Activated CD4-positive, alpha-beta memory T cell treated with anti-CD3 and anti-CD28 coated beads for 36 hours (primary cell): ENCODE measurements at regions of chr3 and their contacts with region 1.

Region 1: GRCh38 chr3:23945903-23946751 is 1.0 kb downstream of the NR1D2 start:
- DNase-seq: peak; percentile 98
- H3K4me3 Mint-ChIP-seq: peak overlapping the region; percentile 87
- H3K27ac Mint-ChIP-seq: peak overlapping the region; percentile 96
- H3K4me1 Mint-ChIP-seq: peaks cover 46% of the 10 kb centered on the region
- H3K27me3 Mint-ChIP-seq: peaks cover 3% of the 10 kb centered on the region

Region 2: GRCh38 chr3:23805633-23806533 is 140.2 kb before region 1 on chr3 and contains the start of gene UBE2E1:
- CTCF ChIA-PET with region 1: no interaction called
- POLR2A ChIA-PET with region 1: interaction called, 3 read pairs
- intact Hi-C with region 1: loop called (anchors 2 kb)
- DNase-seq: peak; percentile 73
- H3K4me3 Mint-ChIP-seq: peak within 1 kb of the TSS; percentile 89
- H3K27ac Mint-ChIP-seq: peak within 1 kb of the TSS; percentile 89
- H3K4me1 Mint-ChIP-seq: peaks cover 38% of the 10 kb centered on the region
- H3K27me3 Mint-ChIP-seq: peaks cover 2% of the 10 kb centered on the region
- total RNA-seq, gene UBE2E1: 82.8 to 84.8 TPM

Region 3: GRCh38 chr3:23916886-23917678 is 29.0 kb before region 1 on chr3 and contains the starts of genes NKIRAS1 and RPL15:
- CTCF ChIA-PET with region 1: no interaction called
- POLR2A ChIA-PET with region 1: interaction called, 31 read pairs
- intact Hi-C with region 1: loop called (anchors 1 kb)
- DNase-seq: peak; percentile 98
- H3K4me3 Mint-ChIP-seq: peak within 1 kb of the TSS; percentile 98
- H3K27ac Mint-ChIP-seq: peak within 1 kb of the TSS; percentile 100
- H3K4me1 Mint-ChIP-seq: peaks cover 51% of the 10 kb centered on the region
- H3K27me3 Mint-ChIP-seq: peaks cover 6% of the 10 kb centered on the region
- total RNA-seq, gene NKIRAS1: 3.9 TPM
- total RNA-seq, gene RPL15: 2,597 to 2,603 TPM

Region 4: GRCh38 chr3:23959135-23959900 is 13.2 kb after region 1 on chr3:
- CTCF ChIA-PET with region 1: no interaction called
- POLR2A ChIA-PET with region 1: no interaction called
- intact Hi-C with region 1: loop called (anchors 1 kb)
- DNase-seq: peak; percentile 43
- H3K4me3 Mint-ChIP-seq: no peak overlapping the region
- H3K27ac Mint-ChIP-seq: peak overlapping the region; percentile 57
- H3K4me1 Mint-ChIP-seq: peaks cover 33% of the 10 kb centered on the region
- H3K27me3 Mint-ChIP-seq: no peaks in the 10 kb centered on the region

Region 5: GRCh38 chr3:24069045-24069444 is 122.9 kb after region 1 on chr3:
- CTCF ChIA-PET with region 1: no interaction called
- POLR2A ChIA-PET with region 1: no interaction called
- intact Hi-C with region 1: no loop called
- DNase-seq: no peak
- H3K4me3 Mint-ChIP-seq: no peak overlapping the region
- H3K27ac Mint-ChIP-seq: no peak overlapping the region
- H3K4me1 Mint-ChIP-seq: no peaks in the 10 kb centered on the region
- H3K27me3 Mint-ChIP-seq: no peaks in the 10 kb centered on the region

Region 6: DNA sequence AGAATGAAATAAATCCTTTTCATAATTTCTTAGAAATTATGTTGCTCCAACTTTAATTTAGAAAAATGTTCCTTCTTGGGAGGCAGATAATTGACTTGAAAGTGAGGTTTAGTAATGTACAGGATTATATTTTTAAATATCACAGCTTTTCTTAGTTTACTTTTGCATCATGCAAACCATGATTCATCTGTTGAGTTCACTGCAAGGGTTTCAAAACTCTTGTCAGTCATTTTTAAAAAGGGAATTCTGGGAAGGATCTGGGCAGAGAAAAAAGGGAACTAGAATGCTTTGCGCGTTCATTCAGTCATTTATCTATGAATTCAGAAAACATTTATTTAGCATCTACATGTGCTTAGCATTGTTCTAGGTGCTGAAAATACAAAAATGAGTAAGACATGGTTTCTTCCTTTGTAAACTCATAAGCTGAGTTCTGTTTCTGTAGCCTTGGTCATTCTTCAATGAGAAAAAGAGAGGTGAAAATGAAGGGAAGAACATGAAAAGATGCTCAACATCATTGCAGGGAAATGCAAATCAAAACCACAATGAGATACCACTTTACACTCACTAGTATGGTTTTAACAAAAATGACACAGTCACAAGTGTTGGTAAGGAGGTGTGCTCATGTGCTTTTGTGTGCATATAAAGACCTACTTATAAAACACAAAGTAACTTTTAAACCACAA is 208.0 kb after region 1 on chr3:
- CTCF ChIA-PET with region 1: no interaction called
- POLR2A ChIA-PET with region 1: no interaction called
- intact Hi-C with region 1: loop called (anchors 2 kb)
- DNase-seq: no peak
- H3K4me3 Mint-ChIP-seq: no peak overlapping the region
- H3K27ac Mint-ChIP-seq: peak overlapping the region; percentile 64
- H3K4me1 Mint-ChIP-seq: peaks cover 27% of the 10 kb centered on the region
- H3K27me3 Mint-ChIP-seq: peaks cover 3% of the 10 kb centered on the region

Region 7: GRCh38 chr3:25789596-25790556 is 1843.7 kb after region 1 on chr3 and contains the start of gene OXSM:
- CTCF ChIA-PET with region 1: no interaction called
- POLR2A ChIA-PET with region 1: no interaction called
- intact Hi-C with region 1: loop called (anchors 10 kb)
- DNase-seq: peak; percentile 96
- H3K4me3 Mint-ChIP-seq: peak within 1 kb of the TSS; percentile 94
- H3K27ac Mint-ChIP-seq: peak within 1 kb of the TSS; percentile 92
- H3K4me1 Mint-ChIP-seq: peaks cover 44% of the 10 kb centered on the region
- H3K27me3 Mint-ChIP-seq: no peaks in the 10 kb centered on the region
- total RNA-seq, gene OXSM: 15.1 to 16.1 TPM